Panc1 (cell line): ENCODE measurements at regions of chr15 and their contacts with region 1.

Region 1: DNA sequence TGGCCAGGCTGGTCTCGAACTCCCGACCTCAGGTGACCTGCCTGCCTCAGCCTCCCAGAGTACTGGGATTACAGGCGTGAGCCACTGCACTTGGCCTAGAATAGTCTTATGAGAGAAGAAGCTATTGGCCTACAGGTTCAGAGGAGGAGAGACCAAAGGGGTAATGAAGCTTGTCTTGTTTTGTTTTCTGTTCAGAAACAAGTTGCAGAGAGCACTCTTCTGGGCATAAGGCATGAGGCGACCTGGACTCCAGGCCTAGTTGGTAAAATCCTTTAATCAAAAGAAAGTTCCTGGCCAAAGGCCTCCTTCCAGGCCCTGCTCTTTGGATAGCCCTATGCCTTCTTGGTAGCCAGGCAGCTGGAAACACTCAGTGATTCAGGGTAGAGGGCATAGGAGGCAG is 87.3 kb upstream of the SKOR1 start:
- DNase-seq: no peak
- ATAC-seq: no peak
- H3K4me3 ChIP-seq: no peak overlapping the region
- H3K27ac ChIP-seq: no peak overlapping the region
- H3K4me1 ChIP-seq: no peaks in the 10 kb centered on the region
- H3K27me3 ChIP-seq: no peaks in the 10 kb centered on the region
- CTCF ChIP-seq: no peak

Region 2: GRCh38 chr15:67592245-67592644 is 145.8 kb before region 1 on chr15:
- CTCF ChIA-PET with region 1: no interaction called
- POLR2A ChIA-PET with region 1: interaction called, 15 read pairs
- in situ Hi-C with region 1: no loop called
- intact Hi-C with region 1: no loop called
- DNase-seq: no peak
- ATAC-seq: no peak
- H3K4me3 ChIP-seq: no peak overlapping the region
- H3K27ac ChIP-seq: no peak overlapping the region
- H3K4me1 ChIP-seq: no peaks in the 10 kb centered on the region
- H3K27me3 ChIP-seq: no peaks in the 10 kb centered on the region
- CTCF ChIP-seq: no peak

Region 3: GRCh38 chr15:67607959-67608715 is 129.9 kb before region 1 on chr15:
- CTCF ChIA-PET with region 1: no interaction called
- POLR2A ChIA-PET with region 1: no interaction called
- in situ Hi-C with region 1: no loop called
- intact Hi-C with region 1: no loop called
- DNase-seq: no peak
- ATAC-seq: no peak
- H3K4me3 ChIP-seq: no peak overlapping the region
- H3K27ac ChIP-seq: no peak overlapping the region
- H3K4me1 ChIP-seq: no peaks in the 10 kb centered on the region; the same call in 1 of the 2 replicates
- H3K27me3 ChIP-seq: no peaks in the 10 kb centered on the region
- CTCF ChIP-seq: no peak